GM13976 (cell line): ENCODE measurements at regions of chr7 and their contacts with region 1.

Region 1: DNA sequence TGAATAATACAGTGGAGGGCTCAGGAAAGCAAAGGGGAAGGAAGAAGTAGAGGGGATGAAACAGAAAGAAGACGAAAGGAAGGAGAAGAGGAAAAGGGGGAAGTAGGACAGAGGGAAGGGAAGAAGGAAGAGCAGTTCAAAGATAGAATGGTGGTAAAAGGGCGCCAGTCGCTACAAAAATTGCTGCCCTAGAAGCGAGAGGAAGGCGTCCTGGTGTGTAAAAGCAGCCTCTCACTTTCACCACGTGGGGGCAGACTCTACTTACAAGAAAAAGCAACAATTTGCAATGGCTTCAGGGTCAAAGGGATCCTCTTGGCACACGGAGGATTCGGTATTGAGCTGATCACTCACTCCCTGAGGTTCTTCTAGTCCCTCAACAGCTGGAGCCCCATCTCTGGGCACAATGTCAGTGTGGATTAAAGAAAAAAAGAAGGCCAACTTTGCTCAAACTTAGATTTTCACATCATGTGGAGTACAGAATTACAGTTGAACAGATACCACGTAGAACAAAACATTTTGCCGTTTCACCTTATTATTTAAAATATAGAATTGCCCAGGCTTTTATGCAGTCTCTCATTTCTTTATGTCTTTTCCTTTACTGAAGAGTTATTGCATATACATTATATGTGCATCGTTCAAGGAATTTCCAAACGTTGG is 31.4 kb upstream of the NPVF start:
- DNase-seq: peak; percentile 46
- CTCF ChIP-seq: peak; percentile 67

Region 2: DNA sequence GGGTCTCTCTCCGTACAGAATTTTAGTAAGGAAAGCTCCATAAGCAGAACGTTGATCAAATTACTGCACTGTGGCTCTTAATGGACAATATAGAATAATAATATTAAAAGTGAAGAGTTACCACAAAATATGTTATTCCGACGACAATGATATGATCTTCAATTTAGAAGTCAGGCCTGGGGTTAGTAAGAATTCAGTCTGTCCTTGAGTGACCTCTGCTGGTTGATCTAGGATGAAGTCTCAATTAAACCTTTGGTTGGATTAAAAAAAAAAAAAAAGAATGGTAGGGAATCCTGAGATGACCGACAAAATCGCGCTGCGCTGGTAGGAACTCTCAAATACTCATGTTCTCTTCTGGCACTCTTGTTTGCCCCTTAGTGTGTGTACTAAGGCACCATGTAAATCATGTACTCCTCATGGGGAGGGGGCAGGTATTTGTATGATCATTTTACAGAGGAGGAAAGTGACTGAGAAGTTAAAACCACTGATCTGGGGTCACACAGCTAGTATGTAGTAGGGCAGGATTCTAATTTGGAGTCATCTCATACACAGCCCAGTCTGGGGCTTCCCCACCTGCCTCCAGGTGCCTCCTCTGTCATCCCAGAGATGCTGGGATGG is 129.9 kb after region 1 on chr7:
- in situ Hi-C with region 1: loop called (anchors 10 kb)
- DNase-seq: peak; percentile 20
- CTCF ChIP-seq: peak; percentile 21

Region 3: DNA sequence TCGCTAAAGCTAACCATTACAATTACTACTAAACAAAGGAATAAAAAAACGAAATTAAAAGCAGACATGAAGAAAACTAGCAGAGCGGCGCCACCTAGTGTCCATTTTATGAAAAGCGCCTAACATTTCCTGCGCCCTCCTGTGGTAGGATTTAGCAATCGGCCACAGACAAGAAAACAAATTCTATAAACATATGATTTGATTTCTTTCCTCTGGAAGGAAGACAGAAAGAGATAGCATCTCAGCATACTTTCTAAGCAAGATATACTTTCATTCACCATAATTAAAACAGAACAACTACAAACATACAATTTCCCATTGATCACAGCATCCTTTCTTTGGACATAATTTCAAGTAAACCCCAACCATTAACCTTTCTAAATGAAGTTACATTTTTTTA is 306.2 kb after region 1 on chr7:
- in situ Hi-C with region 1: loop called (anchors 10 kb)
- DNase-seq: peak; percentile 54
- CTCF ChIP-seq: peak; percentile 98

Region 4: DNA sequence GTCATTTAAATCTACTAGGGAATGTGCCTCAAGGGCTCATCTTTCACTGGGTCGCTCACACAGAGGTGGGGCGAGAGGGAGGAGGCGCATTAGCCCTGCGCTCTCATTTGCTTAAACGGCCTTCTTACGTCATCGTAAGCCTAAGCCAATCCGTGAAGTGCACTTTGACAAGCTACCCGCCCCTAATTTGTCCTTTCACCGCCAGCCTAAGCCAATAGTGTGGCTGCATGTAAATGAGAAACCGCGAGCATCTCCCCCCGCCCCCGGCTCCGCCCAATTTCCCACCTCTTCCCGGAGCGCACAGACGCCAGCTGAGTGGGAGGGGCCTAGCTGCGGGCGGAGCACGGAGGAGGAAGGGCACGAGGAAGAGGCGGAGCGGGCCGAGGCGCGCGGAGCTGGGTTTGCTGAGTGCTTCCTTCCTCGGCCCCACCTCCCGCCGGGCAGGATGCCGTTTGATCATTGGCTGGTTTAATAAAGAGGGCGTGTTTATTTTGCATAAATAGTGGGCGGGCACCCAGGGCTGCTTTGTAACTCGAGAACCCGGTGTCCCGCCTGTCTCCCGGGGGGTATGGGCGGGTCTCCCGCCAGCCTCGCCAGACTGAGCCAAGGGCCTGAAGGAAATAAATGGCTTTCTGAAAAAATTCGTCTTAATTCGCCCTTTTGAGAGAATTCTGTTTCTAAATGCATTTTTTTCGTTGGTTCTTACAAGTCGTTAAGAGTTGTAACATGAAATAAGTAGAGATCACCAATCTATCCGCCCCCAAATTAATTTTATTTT is 602.7 kb after region 1 on chr7:
- in situ Hi-C with region 1: loop called (anchors 25 kb)
- DNase-seq: peak; percentile 92
- CTCF ChIP-seq: no peak